A673 (cell line): ENCODE measurements at regions of chr9 and their contacts with region 1.

Region 1: GRCh38 chr9:82385633-82386032 is 397.1 kb downstream of the SPATA31D1 start:
- DNase-seq: no peak
- H3K4me3 ChIP-seq: no peak overlapping the region
- H3K27ac ChIP-seq: no peak overlapping the region
- H3K4me1 ChIP-seq: no peaks in the 10 kb centered on the region
- H3K27me3 ChIP-seq: no peaks in the 10 kb centered on the region
- CTCF ChIP-seq: no peak

Region 2: DNA sequence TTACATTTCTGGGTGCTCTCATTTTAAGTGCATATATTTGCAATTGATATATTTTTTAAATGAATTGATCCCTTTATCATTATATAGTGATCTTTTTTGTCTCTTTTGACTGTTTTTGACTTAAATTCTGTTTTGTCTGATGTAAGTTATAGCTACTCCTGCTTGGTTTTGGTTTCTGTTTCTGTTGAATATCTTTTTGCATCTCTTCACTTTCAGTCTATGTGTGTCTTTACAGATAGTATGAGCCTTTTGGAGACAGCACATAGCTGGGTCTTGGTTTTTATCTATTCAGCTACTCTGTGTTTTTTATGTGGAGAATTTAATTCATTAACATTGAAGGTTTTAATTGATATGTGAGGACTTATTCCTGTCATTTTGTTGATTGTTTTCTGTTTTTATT is 85.8 kb before region 1 on chr9:
- CTCF ChIA-PET with region 1: no interaction called
- POLR2A ChIA-PET with region 1: no interaction called
- intact Hi-C with region 1: no loop called
- DNase-seq: no peak
- H3K4me3 ChIP-seq: no peak overlapping the region
- H3K27ac ChIP-seq: no peak overlapping the region
- H3K4me1 ChIP-seq: no peaks in the 10 kb centered on the region
- H3K27me3 ChIP-seq: no peaks in the 10 kb centered on the region
- CTCF ChIP-seq: no peak

Region 3: DNA sequence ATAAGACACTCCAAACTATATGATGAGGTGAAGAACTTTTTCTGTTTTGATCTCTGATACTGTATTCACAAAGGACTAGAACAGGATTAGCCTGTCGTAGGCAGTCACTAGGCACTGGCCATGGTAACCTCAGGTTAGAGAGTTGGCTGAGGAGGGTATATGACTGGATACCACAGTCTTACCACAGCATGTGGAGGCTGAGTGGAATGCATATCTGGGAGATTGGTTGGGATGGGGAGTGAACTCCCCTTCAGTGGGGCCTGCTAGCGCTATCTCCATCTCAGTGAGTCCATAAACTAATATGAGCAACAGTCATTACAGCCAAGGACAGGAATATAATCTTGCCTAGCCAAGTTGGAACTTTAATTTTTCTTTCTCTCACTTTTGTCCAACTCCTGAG is 58.0 kb before region 1 on chr9:
- CTCF ChIA-PET with region 1: no interaction called
- POLR2A ChIA-PET with region 1: no interaction called
- intact Hi-C with region 1: loop called (anchors 5 kb)
- DNase-seq: no peak
- H3K4me3 ChIP-seq: no peak overlapping the region
- H3K27ac ChIP-seq: no peak overlapping the region
- H3K4me1 ChIP-seq: no peaks in the 10 kb centered on the region
- H3K27me3 ChIP-seq: no peaks in the 10 kb centered on the region
- CTCF ChIP-seq: no peak

Region 4: GRCh38 chr9:82342046-82342445 is 43.6 kb before region 1 on chr9:
- CTCF ChIA-PET with region 1: no interaction called
- POLR2A ChIA-PET with region 1: no interaction called
- intact Hi-C with region 1: no loop called
- DNase-seq: no peak
- H3K4me3 ChIP-seq: no peak overlapping the region
- H3K27ac ChIP-seq: no peak overlapping the region
- H3K4me1 ChIP-seq: no peaks in the 10 kb centered on the region
- H3K27me3 ChIP-seq: no peaks in the 10 kb centered on the region
- CTCF ChIP-seq: no peak

Region 5: DNA sequence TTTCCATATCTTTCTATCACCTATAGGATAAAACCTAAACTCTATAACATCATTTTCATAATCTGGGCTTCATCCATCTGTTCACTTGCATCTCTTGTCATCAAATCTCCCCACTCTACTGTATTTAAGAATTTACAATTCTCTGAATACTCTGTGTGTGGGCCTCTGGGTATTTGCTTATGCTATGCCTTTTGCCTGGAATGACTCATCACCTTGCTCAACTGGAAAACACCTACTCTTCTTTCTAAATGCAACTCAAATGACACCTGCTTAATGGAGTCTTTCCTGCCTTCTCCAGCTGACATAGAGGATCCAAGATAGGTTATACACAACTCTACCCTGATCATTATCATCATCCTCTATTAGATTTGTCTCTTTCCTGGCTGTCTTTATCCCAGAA is 24.7 kb after region 1 on chr9:
- CTCF ChIA-PET with region 1: no interaction called
- POLR2A ChIA-PET with region 1: no interaction called
- intact Hi-C with region 1: no loop called
- DNase-seq: no peak
- H3K4me3 ChIP-seq: no peak overlapping the region
- H3K27ac ChIP-seq: no peak overlapping the region
- H3K4me1 ChIP-seq: no peaks in the 10 kb centered on the region
- H3K27me3 ChIP-seq: no peaks in the 10 kb centered on the region
- CTCF ChIP-seq: no peak